Heart right ventricle (tissue), 16 donors: ENCODE measurements at regions of chrX and their contacts with region 1.

Region 1: DNA sequence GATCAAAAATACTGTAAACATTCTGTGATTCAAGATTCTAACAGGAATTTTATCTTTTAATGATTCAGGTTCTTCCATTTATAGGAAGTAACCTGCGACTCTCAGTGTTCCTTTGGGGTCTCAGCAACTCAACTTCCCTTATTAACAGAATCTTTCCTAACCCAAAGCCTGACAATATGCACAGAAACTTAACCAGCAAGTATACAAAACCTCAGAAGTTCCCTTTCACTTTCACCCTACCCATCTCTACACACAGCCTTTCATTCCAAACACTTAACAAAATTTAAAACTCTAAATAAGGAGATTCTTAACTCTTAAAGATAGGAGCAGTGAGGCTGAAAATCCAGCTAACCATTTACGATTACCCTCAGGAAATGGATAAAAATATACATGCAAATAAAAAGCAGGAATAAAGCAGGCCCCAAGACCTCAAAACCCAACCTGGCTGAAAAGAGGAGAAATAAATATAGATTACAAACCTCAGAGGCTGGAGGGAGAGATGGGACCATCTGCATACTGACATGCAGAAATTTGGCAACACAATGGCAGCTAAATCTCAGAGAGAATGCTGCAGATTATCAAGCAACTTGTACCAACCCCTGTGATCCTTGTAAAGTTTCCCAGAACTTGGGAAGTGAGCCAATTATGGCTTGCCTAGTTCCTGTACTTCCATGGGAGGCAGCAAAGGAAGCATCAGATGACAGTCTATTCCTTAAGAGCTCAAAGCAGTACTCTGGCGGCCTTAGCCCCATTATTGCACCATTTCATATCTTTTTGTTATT is 101.0 kb downstream of the ATP11C start:
- DNase-seq: peak in 1 of 2 donors; percentile 12
- ATAC-seq: peak in 6 of 8 donors; percentile 55 to 78 (median 59)
- H3K4me3 ChIP-seq: no peak overlapping the region
- H3K27ac ChIP-seq: peak overlapping the region in 3 of 10 donors; percentile 26 to 53 (median 46)
- H3K4me1 ChIP-seq: peaks cover 0 to 50% (median 24%) of the 10 kb centered on the region in 9 donors
- H3K27me3 ChIP-seq: peaks cover 0 to 11% (median 0%) of the 10 kb centered on the region in 7 donors
- CTCF ChIP-seq: no peak

Region 2: DNA sequence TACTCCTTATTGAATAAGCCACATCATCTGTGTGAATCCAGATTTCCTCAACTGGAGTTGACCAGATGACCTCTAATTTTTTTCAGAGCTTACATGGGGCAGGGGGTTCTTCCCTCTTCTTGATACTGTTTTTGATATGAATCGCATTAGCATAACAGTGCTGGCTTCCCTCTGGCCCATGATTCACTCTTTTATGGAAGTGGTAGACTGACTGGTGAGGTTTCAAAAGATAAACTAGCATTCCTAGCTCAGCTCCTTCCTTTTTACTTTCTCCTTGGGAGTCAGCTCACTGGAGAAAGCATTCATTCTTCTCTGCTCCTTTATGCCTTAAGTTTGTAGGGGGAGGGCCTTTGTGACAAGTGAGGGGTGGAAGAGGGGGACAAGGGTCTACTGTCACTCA is 959.3 kb before region 1 on chrX:
- intact Hi-C with region 1: no loop called
- DNase-seq: no peak
- ATAC-seq: no peak
- H3K4me3 ChIP-seq: no peak overlapping the region
- H3K27ac ChIP-seq: no peak overlapping the region
- H3K4me1 ChIP-seq: no peaks in the 10 kb centered on the region
- H3K27me3 ChIP-seq: no peaks in the 10 kb centered on the region
- CTCF ChIP-seq: no peak

Region 3: DNA sequence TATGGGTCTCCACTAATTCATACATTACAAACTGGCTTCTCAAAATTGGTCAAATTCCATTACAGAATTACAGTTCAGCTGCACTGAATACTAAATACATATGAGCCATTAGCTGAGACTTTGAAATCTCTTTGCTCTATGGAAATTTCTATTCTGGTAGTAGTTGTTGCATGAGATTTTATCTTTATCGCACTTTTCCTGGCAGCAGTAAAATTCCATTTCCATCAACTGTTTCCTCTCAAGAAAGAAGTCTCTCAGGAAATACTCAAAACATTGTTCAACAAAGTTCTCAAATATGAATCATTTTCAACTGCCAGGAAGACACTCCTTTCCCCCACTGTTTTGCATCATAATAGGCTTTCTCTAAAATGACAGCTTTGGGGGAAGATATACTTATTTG is 49.7 kb after region 1 on chrX:
- intact Hi-C with region 1: loop called in 1 of 10 experiments (anchors 2 kb)
- DNase-seq: peak in 1 of 2 donors; percentile 3
- ATAC-seq: peak in 5 of 8 donors; percentile 33 to 81 (median 68)
- H3K4me3 ChIP-seq: no peak overlapping the region
- H3K27ac ChIP-seq: peak overlapping the region in 7 of 10 donors; percentile 36 to 72 (median 55)
- H3K4me1 ChIP-seq: peaks cover 0 to 39% (median 5%) of the 10 kb centered on the region in 9 donors
- H3K27me3 ChIP-seq: no peaks in the 10 kb centered on the region
- CTCF ChIP-seq: no peak

Region 4: DNA sequence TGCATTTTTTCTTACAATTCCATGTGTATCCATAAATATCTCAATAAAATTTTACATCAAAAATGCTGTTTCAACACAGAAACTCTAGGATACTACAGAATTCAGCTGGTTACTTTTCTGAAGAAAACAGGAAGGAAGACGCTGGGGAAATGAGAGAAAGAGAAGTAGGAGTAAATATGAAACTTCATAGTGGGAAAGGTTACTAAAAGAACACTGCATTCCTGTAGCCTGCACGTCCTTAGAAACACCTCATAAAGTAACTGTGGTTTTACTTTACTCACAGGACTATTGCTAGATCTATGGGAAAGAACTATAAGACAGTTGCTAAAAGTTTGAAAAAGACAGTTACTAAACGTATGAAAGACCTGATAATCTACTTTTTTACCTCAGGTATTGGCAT is 77.8 kb after region 1 on chrX:
- intact Hi-C with region 1: no loop called
- DNase-seq: no peak
- ATAC-seq: no peak
- H3K4me3 ChIP-seq: no peak overlapping the region
- H3K27ac ChIP-seq: no peak overlapping the region
- H3K4me1 ChIP-seq: peaks cover 0 to 17% (median 0%) of the 10 kb centered on the region in 9 donors
- H3K27me3 ChIP-seq: no peaks in the 10 kb centered on the region
- CTCF ChIP-seq: no peak

Region 5: GRCh38 chrX:139924696-139925095 is 92.8 kb after region 1 on chrX:
- intact Hi-C with region 1: loop called in 1 of 10 experiments (anchors 5 kb)
- DNase-seq: no peak
- ATAC-seq: no peak
- H3K4me3 ChIP-seq: no peak overlapping the region
- H3K27ac ChIP-seq: no peak overlapping the region
- H3K4me1 ChIP-seq: peaks cover 0 to 13% (median 2%) of the 10 kb centered on the region in 9 donors
- H3K27me3 ChIP-seq: peaks cover 0 to 14% (median 0%) of the 10 kb centered on the region in 7 donors
- CTCF ChIP-seq: no peak